Activated T-helper 1 cell treated with anti-CD3 and anti-CD28 coated beads, Interleukin-12 subunit alpha, Interleukin-12 subunit beta, Interleukin-2, Interleukin-4 antibody, amounts not matched to agents 30 ng/mL and 10 ng/mL and 1 ng/mL, durations not matched to agents 14 hours and 24 hours and 36 hours (primary cell): ENCODE measurements at regions of chr2 and their contacts with region 1.

Region 1: GRCh38 chr2:104849618-104850141 is 4.2 kb upstream of the POU3F3 start:
- DNase-seq: peak; percentile 33
- H3K4me3 Mint-ChIP-seq: no peak overlapping the region
- H3K27ac Mint-ChIP-seq: no peak overlapping the region
- H3K4me1 Mint-ChIP-seq: peaks cover 21% of the 10 kb centered on the region
- H3K27me3 Mint-ChIP-seq: peaks cover 92% of the 10 kb centered on the region

Region 2: GRCh38 chr2:103161456-103162289 is 1688.0 kb before region 1 on chr2:
- intact Hi-C with region 1: loop called (anchors 5 kb)
- DNase-seq: no peak
- H3K4me3 Mint-ChIP-seq: no peak overlapping the region
- H3K27ac Mint-ChIP-seq: no peak overlapping the region
- H3K4me1 Mint-ChIP-seq: no peaks in the 10 kb centered on the region
- H3K27me3 Mint-ChIP-seq: peaks cover 4% of the 10 kb centered on the region